ENCODE measurements at regions of chr13 and their contacts with region 1.

Region 1: DNA sequence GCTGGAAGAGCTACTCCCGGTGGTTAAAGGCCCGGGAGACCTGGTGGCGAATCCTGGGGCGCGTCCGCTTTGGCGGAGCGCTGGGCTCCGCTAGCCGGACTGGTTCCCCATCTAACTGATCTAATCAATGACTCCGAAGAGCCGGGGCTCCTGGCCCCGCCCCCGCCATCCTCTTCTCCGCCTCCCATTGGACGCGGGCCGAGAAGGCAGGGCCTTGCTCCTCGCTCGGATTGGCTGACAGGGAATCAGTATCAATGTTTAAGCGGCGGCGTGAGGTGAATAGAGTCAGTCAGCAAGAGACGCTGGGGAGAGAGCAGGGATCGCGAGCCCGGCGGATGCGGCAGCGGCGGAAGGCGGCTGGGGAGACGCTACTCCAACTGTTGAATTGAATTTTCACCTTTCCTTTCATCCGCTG is 1.7 kb upstream of the PCDH17 start:
- DNase-seq: peak; percentile 90 to 92
- ATAC-seq: peak; percentile 72 to 86 (median 82)
- H3K4me3 ChIP-seq: peak overlapping the region; percentile 32 to 77 (median 64)
- H3K27ac ChIP-seq: peak overlapping the region in 5 of 10 donors; percentile 62 to 87 (median 82)
- H3K4me1 ChIP-seq: peaks cover 0 to 36% (median 27%) of the 10 kb centered on the region in 9 donors
- H3K27me3 ChIP-seq: peaks cover 0 to 73% (median 26%) of the 10 kb centered on the region in 7 donors
- CTCF ChIP-seq: no peak

Region 2: GRCh38 chr13:57716295-57716694 is 86.5 kb after region 1 on chr13:
- intact Hi-C with region 1: loop called in 2 of 10 experiments (anchors 5 to 10 kb)
- DNase-seq: no peak
- ATAC-seq: no peak
- H3K4me3 ChIP-seq: no peak overlapping the region
- H3K27ac ChIP-seq: no peak overlapping the region
- H3K4me1 ChIP-seq: no peaks in the 10 kb centered on the region
- H3K27me3 ChIP-seq: no peaks in the 10 kb centered on the region
- CTCF ChIP-seq: peak in 1 of 9 donors; percentile 34

Region 3: GRCh38 chr13:57740719-57741118 is 110.9 kb after region 1 on chr13:
- intact Hi-C with region 1: no loop called
- DNase-seq: peak; percentile 20 to 43
- ATAC-seq: peak in 6 of 8 donors; percentile 62 to 86 (median 83)
- H3K4me3 ChIP-seq: no peak overlapping the region
- H3K27ac ChIP-seq: no peak overlapping the region
- H3K4me1 ChIP-seq: peaks cover 0 to 22% (median 5%) of the 10 kb centered on the region in 9 donors
- H3K27me3 ChIP-seq: no peaks in the 10 kb centered on the region
- CTCF ChIP-seq: no peak

Region 4: GRCh38 chr13:57799624-57800023 is 169.8 kb after region 1 on chr13:
- intact Hi-C with region 1: loop called in 1 of 10 experiments (anchors 2 kb)
- DNase-seq: no peak
- ATAC-seq: peak in 2 of 8 donors; percentile 67 to 68
- H3K4me3 ChIP-seq: no peak overlapping the region
- H3K27ac ChIP-seq: peak overlapping the region in 1 of 10 donors; percentile 29
- H3K4me1 ChIP-seq: no peaks in the 10 kb centered on the region
- H3K27me3 ChIP-seq: no peaks in the 10 kb centered on the region
- CTCF ChIP-seq: no peak

Region 5: DNA sequence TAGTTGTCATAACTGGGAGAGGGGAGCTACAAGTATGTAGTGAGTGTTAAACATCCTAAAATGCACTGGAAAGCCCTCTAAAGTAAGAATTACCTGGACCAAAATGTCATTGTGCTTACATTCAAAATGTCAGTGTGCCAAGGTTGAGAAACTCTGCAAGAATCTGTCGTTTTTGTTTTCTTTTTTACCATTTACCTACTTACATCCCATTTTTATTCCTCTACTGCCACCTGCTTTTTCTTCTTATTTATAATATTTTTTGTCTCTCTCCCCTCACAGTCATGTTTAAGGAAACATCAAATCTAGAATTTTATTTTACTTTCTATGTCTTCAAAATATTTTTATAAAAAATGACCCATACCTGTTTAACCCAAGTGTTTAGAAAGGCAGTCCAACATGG is 228.1 kb after region 1 on chr13:
- intact Hi-C with region 1: loop called in 8 of 10 experiments (anchors 2 to 10 kb)
- DNase-seq: no peak
- ATAC-seq: no peak
- H3K4me3 ChIP-seq: no peak overlapping the region
- H3K27ac ChIP-seq: no peak overlapping the region
- H3K4me1 ChIP-seq: no peaks in the 10 kb centered on the region
- H3K27me3 ChIP-seq: no peaks in the 10 kb centered on the region
- CTCF ChIP-seq: peak in 5 of 9 donors; percentile 6 to 49 (median 43)

Region 6: DNA sequence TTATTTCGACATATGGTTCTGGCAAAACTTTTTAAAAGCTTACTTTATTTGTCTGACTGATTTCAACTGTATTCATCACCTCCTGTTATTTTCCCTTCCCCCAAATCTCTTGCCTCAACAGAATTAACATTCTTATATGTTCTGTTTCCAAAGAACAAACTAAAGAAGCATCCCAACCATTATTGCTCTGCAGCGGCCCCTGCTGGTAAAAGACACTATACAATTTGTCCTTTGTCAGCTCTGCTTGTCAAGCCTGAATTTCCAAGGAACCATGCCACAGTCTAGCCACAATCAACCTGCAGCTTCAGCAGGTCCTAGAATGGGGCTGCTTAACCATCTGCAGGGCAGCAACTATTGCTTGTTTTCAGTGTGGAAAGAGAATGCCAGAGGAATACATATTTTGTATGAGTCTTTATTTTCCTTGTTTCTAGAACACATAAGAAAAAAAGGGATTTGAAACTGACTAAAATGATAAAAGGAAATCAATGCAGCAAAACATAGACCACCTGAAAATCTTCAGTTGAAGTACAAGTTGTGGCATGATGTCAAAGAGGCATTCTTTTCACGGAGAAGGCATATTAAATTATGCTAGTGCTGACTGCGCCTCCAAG is 1688.6 kb after region 1 on chr13:
- intact Hi-C with region 1: loop called in 2 of 10 experiments (anchors 2 to 10 kb)
- DNase-seq: peak; percentile 67 to 83
- ATAC-seq: peak in 6 of 8 donors; percentile 23 to 82 (median 64)
- H3K4me3 ChIP-seq: no peak overlapping the region
- H3K27ac ChIP-seq: peak overlapping the region in 4 of 10 donors; percentile 12 to 68 (median 50)
- H3K4me1 ChIP-seq: peaks cover 0 to 24% (median 5%) of the 10 kb centered on the region in 9 donors
- H3K27me3 ChIP-seq: no peaks in the 10 kb centered on the region
- CTCF ChIP-seq: peak; percentile 60 to 88 (median 79)

Measured in heart right ventricle (tissue), 16 donors.